Aorta (tissue), 5 donors: ENCODE measurements at regions of chr4 and their contacts with region 1.

Region 1: GRCh38 chr4:34771632-34772031 is 1472.7 kb downstream of the ARAP2 start:
- DNase-seq: no peak
- ATAC-seq: no peak
- H3K4me3 ChIP-seq: no peak overlapping the region
- H3K27ac ChIP-seq: no peak overlapping the region
- H3K4me1 ChIP-seq: no peaks in the 10 kb centered on the region
- H3K27me3 ChIP-seq: no peaks in the 10 kb centered on the region

Region 2: GRCh38 chr4:34733185-34733941 is 38.3 kb before region 1 on chr4:
- intact Hi-C with region 1: no loop called
- DNase-seq: no peak
- ATAC-seq: no peak
- H3K4me3 ChIP-seq: no peak overlapping the region
- H3K27ac ChIP-seq: no peak overlapping the region
- H3K4me1 ChIP-seq: no peaks in the 10 kb centered on the region
- H3K27me3 ChIP-seq: no peaks in the 10 kb centered on the region

Region 3: GRCh38 chr4:34826660-34827059 is 55.0 kb after region 1 on chr4:
- intact Hi-C with region 1: loop called in 1 of 2 experiments (anchors 2 kb)
- DNase-seq: no peak
- ATAC-seq: no peak
- H3K4me3 ChIP-seq: no peak overlapping the region
- H3K27ac ChIP-seq: no peak overlapping the region
- H3K4me1 ChIP-seq: no peaks in the 10 kb centered on the region
- H3K27me3 ChIP-seq: no peaks in the 10 kb centered on the region